ENCODE measurements at regions of chr1 and their contacts with region 1.

Region 1: DNA sequence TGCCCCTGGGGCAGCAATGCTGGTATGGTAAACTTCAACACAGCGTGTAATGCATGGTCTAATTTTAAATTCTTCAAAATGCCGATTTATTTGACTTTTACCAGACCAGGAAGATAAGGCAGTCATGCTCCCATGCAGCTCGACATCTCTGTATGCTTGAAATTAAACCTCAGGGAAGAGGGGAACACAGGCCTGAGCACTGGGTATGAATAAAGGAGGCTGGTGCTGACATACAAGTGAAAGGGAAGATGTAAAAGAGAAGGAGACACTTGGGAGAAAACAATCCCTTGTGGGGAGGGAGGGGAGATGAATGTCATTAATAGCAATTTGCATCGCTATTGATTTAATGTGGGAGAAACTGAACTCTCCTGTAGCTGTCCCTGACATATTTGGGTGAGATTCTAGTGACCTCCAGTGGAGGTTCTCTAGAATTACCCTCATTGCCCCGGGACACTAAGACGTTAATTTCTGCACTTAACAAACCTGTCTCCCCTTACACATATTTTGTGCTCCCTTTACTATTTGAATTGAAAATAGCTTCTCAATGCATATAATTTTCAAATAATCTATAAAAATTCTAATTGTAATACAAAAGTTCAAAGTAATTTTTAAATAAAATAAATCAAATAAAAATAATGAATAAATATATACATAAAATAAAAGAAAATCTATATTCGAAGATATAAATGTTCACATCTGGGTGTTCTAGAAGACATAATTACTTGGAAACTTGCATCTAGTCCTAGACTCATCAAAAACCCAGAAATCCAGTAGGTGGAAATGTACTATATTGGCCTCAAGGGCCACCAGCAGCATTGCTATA is 283.1 kb downstream of the LMX1A start:
- DNase-seq: no peak
- H3K4me3 ChIP-seq: no peak overlapping the region
- H3K27ac ChIP-seq: peak overlapping the region in 3 of 4 donors; percentile 19 to 46 (median 42)
- H3K4me1 ChIP-seq: peaks cover 0 to 43% (median 19%) of the 10 kb centered on the region in 4 donors
- H3K27me3 ChIP-seq: no peaks in the 10 kb centered on the region
- CTCF ChIP-seq: peak; percentile 65 to 80 (median 78)
- EP300 ChIP-seq: no peak
- POLR2A ChIP-seq: no peak

Region 2: GRCh38 chr1:163361123-163361934 is 1712.1 kb before region 1 on chr1:
- intact Hi-C with region 1: loop called (anchors 10 kb)
- DNase-seq: no peak
- H3K4me3 ChIP-seq: no peak overlapping the region
- H3K27ac ChIP-seq: no peak overlapping the region
- H3K4me1 ChIP-seq: peaks cover 0 to 7% (median 0%) of the 10 kb centered on the region in 4 donors
- H3K27me3 ChIP-seq: no peaks in the 10 kb centered on the region
- CTCF ChIP-seq: peak in 2 of 4 experiments; percentile 33 to 39
- EP300 ChIP-seq: no peak
- POLR2A ChIP-seq: no peak

Region 3: DNA sequence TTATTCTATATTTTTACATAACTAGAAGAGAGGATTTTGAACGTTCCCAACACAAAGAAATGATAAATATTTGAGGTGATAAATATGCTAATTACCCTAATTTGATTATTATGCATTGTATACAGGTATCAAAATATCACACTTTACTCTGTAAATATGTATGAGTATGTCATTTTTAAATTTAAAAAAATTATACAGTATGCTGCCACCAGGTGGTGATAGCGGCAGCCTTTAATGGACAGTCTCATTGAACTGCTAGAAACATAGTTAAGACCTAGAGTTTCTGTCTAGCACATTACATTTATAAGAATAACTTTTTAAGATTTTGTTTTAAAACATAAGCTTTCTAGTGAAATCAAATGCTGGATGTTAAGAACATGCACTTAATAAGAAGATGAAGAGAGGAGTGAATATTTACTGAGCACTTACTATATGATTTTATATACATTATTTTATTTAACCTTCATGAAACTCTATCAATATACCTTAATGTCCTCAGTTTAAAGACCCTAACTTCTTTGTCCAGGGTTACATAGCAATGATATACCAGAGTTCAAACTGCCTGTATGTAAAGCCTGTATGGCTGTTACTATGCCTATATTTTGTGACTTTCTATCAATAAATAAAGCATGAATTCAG is 1544.6 kb before region 1 on chr1:
- intact Hi-C with region 1: loop called (anchors 5 kb)
- DNase-seq: no peak
- H3K4me3 ChIP-seq: no peak overlapping the region
- H3K27ac ChIP-seq: no peak overlapping the region
- H3K4me1 ChIP-seq: no peaks in the 10 kb centered on the region
- H3K27me3 ChIP-seq: no peaks in the 10 kb centered on the region
- CTCF ChIP-seq: peak; percentile 33 to 62 (median 50)
- EP300 ChIP-seq: no peak
- POLR2A ChIP-seq: no peak

Region 4: GRCh38 chr1:164177118-164177517 is 896.3 kb before region 1 on chr1:
- intact Hi-C with region 1: loop called (anchors 10 kb)
- DNase-seq: no peak
- H3K4me3 ChIP-seq: no peak overlapping the region
- H3K27ac ChIP-seq: no peak overlapping the region
- H3K4me1 ChIP-seq: no peaks in the 10 kb centered on the region
- H3K27me3 ChIP-seq: no peaks in the 10 kb centered on the region
- CTCF ChIP-seq: no peak
- EP300 ChIP-seq: no peak
- POLR2A ChIP-seq: no peak

Region 5: DNA sequence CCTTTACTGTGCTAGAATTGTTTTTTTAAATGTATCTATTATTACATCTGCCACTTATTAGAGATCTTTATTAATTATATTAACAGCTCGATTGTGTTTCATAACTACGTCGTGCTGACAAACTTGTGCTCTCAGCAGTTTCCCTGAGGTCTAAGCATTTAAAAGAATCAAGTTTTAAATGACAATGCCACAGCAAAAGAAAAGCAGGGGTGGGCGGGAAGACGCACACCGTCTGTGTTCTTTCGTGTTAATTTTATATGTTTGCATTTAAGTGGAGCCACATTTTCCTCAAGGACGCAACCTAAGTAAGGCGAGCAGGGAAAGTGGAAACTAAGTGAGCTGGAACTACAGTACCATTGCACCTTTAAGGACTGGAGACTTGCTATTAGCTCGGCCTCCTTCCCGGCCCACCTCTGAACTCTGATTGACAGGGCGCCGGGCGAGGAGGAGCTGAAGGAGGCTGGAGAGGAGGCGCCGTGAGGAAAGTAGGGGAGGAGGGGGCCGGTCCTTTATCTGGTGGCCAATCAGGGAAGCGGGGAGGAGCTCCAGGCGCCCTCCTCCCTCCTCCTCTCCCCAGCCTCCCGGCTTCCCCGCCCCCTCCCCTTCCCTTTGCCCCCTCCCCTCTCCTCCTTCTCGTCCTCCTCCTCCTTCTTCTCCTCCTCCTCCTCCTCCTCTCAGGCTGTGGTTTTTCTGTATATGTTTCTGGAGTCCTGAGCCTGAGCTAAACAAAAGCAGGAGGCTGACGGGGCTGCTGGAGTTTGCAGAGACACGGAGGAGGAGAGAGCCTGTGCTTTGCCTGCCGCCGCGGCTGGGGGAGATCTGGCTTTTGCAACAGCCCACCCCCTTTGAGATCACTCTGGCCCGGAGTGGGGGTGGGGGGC is 514.7 kb before region 1 on chr1 and contains the start of gene PBX1:
- intact Hi-C with region 1: loop called (anchors 10 kb)
- DNase-seq: peak; percentile 100
- H3K4me3 ChIP-seq: peak within 1 kb of the TSS; percentile 67 to 90 (median 84)
- H3K27ac ChIP-seq: peak within 1 kb of the TSS; percentile 82 to 94 (median 88)
- H3K4me1 ChIP-seq: peaks cover 0 to 8% (median 3%) of the 10 kb centered on the region in 4 donors
- H3K27me3 ChIP-seq: no peaks in the 10 kb centered on the region
- CTCF ChIP-seq: no peak
- EP300 ChIP-seq: no peak
- POLR2A ChIP-seq: peak; percentile 66 to 82
- total RNA-seq, gene PBX1: 118 to 168 (median 161) TPM

Region 6: GRCh38 chr1:164707868-164708331 is 365.5 kb before region 1 on chr1:
- intact Hi-C with region 1: loop called (anchors 10 kb)
- DNase-seq: peak; percentile 79
- H3K4me3 ChIP-seq: peak overlapping the region in 1 of 4 donors; percentile 0
- H3K27ac ChIP-seq: peak overlapping the region; percentile 77 to 87 (median 80)
- H3K4me1 ChIP-seq: peaks cover 0 to 96% (median 88%) of the 10 kb centered on the region in 4 donors
- H3K27me3 ChIP-seq: no peaks in the 10 kb centered on the region
- CTCF ChIP-seq: no peak
- EP300 ChIP-seq: no peak
- POLR2A ChIP-seq: no peak

Region 7: GRCh38 chr1:164823486-164824279 is 249.7 kb before region 1 on chr1:
- intact Hi-C with region 1: loop called (anchors 10 kb)
- DNase-seq: peak; percentile 89
- H3K4me3 ChIP-seq: no peak overlapping the region
- H3K27ac ChIP-seq: peak overlapping the region; percentile 69 to 85 (median 80)
- H3K4me1 ChIP-seq: peaks cover 0 to 58% (median 56%) of the 10 kb centered on the region in 4 donors
- H3K27me3 ChIP-seq: no peaks in the 10 kb centered on the region
- CTCF ChIP-seq: peak in 3 of 4 experiments; percentile 10 to 34 (median 14)
- EP300 ChIP-seq: peak; percentile 72 to 93 (median 89)
- POLR2A ChIP-seq: no peak

Region 8: DNA sequence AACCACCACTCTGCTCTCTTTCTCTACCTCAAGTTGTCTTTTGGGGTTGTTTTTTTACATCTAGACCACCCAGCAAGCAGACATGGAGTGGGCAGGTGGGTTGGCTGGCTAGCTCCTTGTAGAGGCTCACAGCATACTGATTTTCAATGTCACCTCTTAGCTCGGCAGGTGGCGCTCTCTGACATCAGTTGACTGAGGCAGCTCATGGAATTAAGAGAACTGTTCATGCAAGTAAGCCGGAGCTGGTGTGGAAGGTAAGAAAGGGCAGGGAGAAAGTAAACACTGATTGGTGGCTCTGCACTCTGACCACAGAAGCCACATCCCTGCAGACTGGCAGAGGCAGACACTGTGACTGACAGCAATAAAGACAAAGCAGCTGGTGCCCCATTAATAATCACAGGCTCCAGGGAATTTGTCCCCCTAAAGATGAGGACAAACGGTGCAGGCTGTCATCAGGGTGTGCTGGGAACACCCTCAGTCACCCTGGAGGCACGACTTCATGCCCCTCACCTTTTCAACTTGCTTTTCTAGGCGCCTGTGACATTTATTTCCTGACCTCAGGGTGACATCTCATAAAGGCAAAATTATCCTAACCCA is 56.3 kb after region 1 on chr1:
- intact Hi-C with region 1: no loop called
- DNase-seq: no peak
- H3K4me3 ChIP-seq: no peak overlapping the region
- H3K27ac ChIP-seq: no peak overlapping the region
- H3K4me1 ChIP-seq: no peaks in the 10 kb centered on the region
- H3K27me3 ChIP-seq: peaks cover 0 to 22% (median 0%) of the 10 kb centered on the region in 3 donors
- CTCF ChIP-seq: peak in 1 of 4 experiments; percentile 24
- EP300 ChIP-seq: no peak
- POLR2A ChIP-seq: no peak